ENCODE measurements at regions of chr1 and their contacts with region 1.

Region 1: GRCh38 chr1:231337472-231338269 is at the start of gene EXOC8:
- DNase-seq: peak; percentile 97
- H3K4me3 Mint-ChIP-seq: peak within 1 kb of the TSS; percentile 100
- H3K27ac Mint-ChIP-seq: peak within 1 kb of the TSS; percentile 99
- H3K4me1 Mint-ChIP-seq: peaks cover 40% of the 10 kb centered on the region
- H3K27me3 Mint-ChIP-seq: no peaks in the 10 kb centered on the region
- CTCF ChIP-seq: no peak
- total RNA-seq, gene EXOC8: 24.5 and 26.2 TPM in 2 replicates

Region 2: DNA sequence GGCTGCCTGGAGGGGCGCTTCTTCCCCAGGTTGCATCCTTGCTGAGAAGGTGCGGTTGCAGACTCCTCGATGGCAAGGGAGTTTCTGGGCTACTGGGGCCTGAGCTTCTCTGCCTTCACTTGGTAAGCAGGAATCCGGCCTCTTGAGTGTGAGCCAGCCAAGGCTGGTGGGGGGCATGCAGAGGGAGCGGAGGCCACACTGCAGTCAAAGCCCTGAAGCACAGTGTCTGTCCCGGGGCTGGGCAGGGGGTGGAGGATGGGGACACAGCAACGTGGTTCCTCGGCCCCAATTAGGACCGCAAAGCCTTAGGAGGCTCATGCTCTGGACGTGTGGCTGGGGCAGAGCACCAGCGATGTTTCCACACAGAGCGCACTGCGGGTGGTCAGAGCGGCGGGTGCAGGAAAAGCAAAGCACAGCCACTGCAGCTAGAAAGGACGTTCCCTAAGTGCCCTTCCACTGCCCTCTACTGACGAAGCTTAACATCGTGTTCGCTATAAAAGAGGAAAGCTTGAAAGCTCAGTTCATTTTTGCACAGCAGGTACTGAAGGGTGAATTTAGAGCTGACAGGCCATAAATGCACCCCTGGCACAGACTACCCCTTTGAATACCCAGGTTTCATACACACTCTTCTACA is 756.1 kb before region 1 on chr1:
- CTCF ChIA-PET with region 1: no interaction called
- intact Hi-C with region 1: no loop called
- DNase-seq: no peak
- H3K4me3 Mint-ChIP-seq: no peak overlapping the region
- H3K27ac Mint-ChIP-seq: no peak overlapping the region
- H3K4me1 Mint-ChIP-seq: peaks cover 3% of the 10 kb centered on the region
- H3K27me3 Mint-ChIP-seq: no peaks in the 10 kb centered on the region
- CTCF ChIP-seq: no peak

Region 3: DNA sequence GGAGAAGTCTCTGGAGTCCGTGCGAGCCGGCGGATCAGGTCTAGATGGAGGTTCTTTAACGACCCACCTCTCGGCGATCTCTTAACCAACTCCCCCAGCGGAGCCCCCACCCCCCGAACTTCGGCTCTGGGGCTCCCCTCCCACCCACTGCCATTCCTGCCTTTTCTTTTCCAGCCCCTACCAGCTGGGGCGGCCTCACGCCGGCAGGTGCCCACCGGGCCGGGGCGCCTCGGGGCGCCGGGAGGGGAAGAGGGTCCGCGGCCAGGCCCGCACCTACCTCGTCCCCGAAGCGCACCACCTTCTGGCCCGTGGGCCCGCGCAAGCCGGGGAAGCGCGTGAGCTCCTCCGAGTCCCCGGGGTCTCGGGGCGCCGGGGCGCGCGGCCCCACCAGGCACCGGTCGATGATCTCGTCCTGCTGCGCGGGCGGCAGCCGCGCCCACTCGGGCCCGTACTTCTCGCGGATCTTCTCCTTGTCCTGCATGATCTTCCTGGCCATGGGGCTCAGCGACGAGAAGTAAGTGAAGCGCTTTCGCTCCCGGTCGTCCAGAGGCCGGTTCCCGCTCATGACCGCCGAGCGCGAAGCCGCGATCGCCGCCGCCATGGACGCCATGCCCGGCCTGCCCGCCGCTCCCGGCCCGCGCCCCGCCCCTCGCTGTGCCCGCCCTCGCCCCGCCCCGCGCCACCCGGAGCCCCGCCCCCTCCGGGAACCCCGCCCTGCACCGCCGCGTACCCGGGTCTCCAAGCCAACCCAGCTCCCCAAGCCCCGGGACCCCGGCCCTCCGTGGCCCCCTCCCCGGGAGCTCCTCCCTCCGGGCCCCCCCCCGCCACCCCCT is 469.6 kb before region 1 on chr1 and contains the start of gene C1orf198:
- CTCF ChIA-PET with region 1: interaction called, 3 read pairs
- intact Hi-C with region 1: loop called (anchors 5 kb)
- DNase-seq: peak; percentile 88
- H3K4me3 Mint-ChIP-seq: peak within 1 kb of the TSS; percentile 86
- H3K27ac Mint-ChIP-seq: peak within 1 kb of the TSS; percentile 97
- H3K4me1 Mint-ChIP-seq: peaks cover 50% of the 10 kb centered on the region
- H3K27me3 Mint-ChIP-seq: no peaks in the 10 kb centered on the region
- CTCF ChIP-seq: no peak
- total RNA-seq, gene C1orf198: 77.2 and 80.4 TPM in 2 replicates

Region 4: DNA sequence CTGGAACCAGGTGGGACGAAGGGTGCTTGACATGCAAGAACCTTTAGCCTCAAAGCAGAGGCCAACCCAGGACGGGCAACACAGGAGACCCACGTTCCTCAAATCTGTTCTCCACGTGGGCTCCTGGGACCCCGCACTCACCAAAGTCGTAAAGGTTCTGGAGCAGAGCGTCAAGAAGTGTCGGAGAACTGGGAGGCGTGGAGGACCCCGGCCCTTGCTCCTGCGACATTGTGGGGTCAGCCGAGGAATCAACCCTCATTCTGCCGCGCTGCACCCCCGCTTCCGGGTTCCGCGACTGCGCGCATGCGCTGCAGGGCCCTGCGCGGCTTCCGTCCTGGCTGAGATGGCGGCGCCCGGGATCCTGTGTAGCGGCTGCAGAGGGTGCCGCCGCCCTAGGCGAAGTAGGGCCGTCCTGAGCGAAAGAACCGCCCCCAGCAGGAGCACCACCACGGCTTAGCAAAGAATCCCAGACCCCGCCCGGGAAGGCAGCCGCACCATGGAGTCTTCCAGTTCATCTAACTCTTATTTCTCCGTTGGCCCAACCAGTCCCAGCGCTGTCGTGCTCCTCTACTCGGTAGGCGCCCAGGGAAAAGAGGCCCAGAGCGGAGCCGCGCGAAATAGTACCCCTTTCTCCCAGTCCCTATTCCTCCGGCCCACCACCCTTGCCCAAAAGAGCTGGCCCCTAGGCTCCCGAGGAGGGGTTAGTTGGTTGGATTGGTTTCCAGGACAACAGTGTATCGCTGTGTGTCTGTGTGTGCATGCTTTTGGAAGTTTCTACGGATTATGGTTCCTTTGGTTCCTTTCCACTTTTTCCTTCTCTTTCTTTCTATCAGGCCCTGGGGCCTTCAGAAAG is 96.6 kb before region 1 on chr1 and contains the start of gene GNPAT:
- CTCF ChIA-PET with region 1: interaction called, 3 read pairs
- intact Hi-C with region 1: loop called (anchors 2 kb)
- DNase-seq: peak; percentile 94
- H3K4me3 Mint-ChIP-seq: peak within 1 kb of the TSS; percentile 94
- H3K27ac Mint-ChIP-seq: peak within 1 kb of the TSS; percentile 87
- H3K4me1 Mint-ChIP-seq: peaks cover 46% of the 10 kb centered on the region
- H3K27me3 Mint-ChIP-seq: no peaks in the 10 kb centered on the region
- CTCF ChIP-seq: no peak
- total RNA-seq, gene GNPAT: 44.5 and 52.7 TPM in 2 replicates

Measured in Calu3 (cell line).